Body of pancreas (tissue), 4 donors: ENCODE measurements at regions of chr11 and their contacts with region 1.

Region 1: DNA sequence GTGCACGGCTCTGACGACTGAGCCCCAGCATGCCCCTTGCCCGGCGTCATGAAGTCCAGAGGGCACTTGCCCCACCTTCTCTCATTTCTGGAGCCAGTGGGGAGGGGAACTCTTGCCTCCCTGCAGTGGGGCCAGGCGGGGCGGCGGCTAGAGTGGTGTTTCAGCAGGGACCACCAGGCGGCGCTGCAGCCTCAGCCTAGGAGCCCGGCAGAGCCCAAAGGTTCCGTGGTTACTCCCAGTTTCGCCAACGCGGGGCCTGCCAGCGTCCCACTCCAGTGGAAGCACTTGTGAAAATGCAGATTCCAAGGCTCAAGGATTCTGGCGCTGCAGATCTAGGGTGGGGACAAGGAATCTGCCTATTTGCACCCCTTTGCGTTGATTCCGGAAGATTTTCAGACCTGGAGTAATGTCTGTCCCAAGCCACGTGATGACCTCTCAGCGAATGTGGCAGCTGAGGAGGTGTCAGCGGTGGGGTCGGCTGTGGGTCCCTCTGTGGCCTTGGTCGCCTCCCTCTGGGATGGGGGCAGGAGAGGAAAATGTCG is 55.7 kb downstream of the CD82 start:
- DNase-seq: peak; percentile 51 to 69 (median 59)
- ATAC-seq: peak; percentile 73
- H3K4me3 ChIP-seq: no peak overlapping the region
- H3K27ac ChIP-seq: no peak overlapping the region
- H3K4me1 ChIP-seq: peaks cover 6% of the 10 kb centered on the region
- H3K27me3 ChIP-seq: no peaks in the 10 kb centered on the region
- CTCF ChIP-seq: peak; percentile 66 to 85 (median 80)
- POLR2A ChIP-seq: no peak

Region 2: GRCh38 chr11:44556735-44557409 is 64.3 kb before region 1 on chr11:
- intact Hi-C with region 1: loop called (anchors 2 kb)
- DNase-seq: peak; percentile 70 to 80 (median 74)
- ATAC-seq: peak; percentile 77
- H3K4me3 ChIP-seq: no peak overlapping the region
- H3K27ac ChIP-seq: no peak overlapping the region
- H3K4me1 ChIP-seq: peaks cover 5% of the 10 kb centered on the region
- H3K27me3 ChIP-seq: no peaks in the 10 kb centered on the region
- CTCF ChIP-seq: peak; percentile 56 to 96 (median 89)
- POLR2A ChIP-seq: no peak

Region 3: GRCh38 chr11:44911029-44911814 is 290.0 kb after region 1 on chr11:
- intact Hi-C with region 1: loop called (anchors 5 kb)
- DNase-seq: peak; percentile 88 to 91 (median 88)
- ATAC-seq: peak; percentile 86
- H3K4me3 ChIP-seq: no peak overlapping the region
- H3K27ac ChIP-seq: no peak overlapping the region
- H3K4me1 ChIP-seq: peaks cover 6% of the 10 kb centered on the region
- H3K27me3 ChIP-seq: no peaks in the 10 kb centered on the region
- CTCF ChIP-seq: peak; percentile 69 to 84 (median 78)
- POLR2A ChIP-seq: no peak

Region 4: GRCh38 chr11:44964526-44965209 is 343.5 kb after region 1 on chr11:
- intact Hi-C with region 1: no loop called
- DNase-seq: no peak
- ATAC-seq: no peak
- H3K4me3 ChIP-seq: no peak overlapping the region
- H3K27ac ChIP-seq: no peak overlapping the region
- H3K4me1 ChIP-seq: no peaks in the 10 kb centered on the region
- H3K27me3 ChIP-seq: no peaks in the 10 kb centered on the region
- CTCF ChIP-seq: no peak
- POLR2A ChIP-seq: no peak